Calu3 (cell line): ENCODE measurements at regions of chr1 and their contacts with region 1.

Region 1: GRCh38 chr1:110780600-110781484 is 92.1 kb upstream of the CD53 start:
- DNase-seq: peak; percentile 54
- H3K4me3 Mint-ChIP-seq: no peak overlapping the region
- H3K27ac Mint-ChIP-seq: no peak overlapping the region
- H3K4me1 Mint-ChIP-seq: no peaks in the 10 kb centered on the region
- H3K27me3 Mint-ChIP-seq: peaks cover 71% of the 10 kb centered on the region
- CTCF ChIP-seq: peak; percentile 55

Region 2: GRCh38 chr1:110524311-110525251 is 256.3 kb before region 1 on chr1:
- CTCF ChIA-PET with region 1: no interaction called
- intact Hi-C with region 1: loop called (anchors 2 kb)
- DNase-seq: peak; percentile 37
- H3K4me3 Mint-ChIP-seq: no peak overlapping the region
- H3K27ac Mint-ChIP-seq: no peak overlapping the region
- H3K4me1 Mint-ChIP-seq: peaks cover 6% of the 10 kb centered on the region
- H3K27me3 Mint-ChIP-seq: peaks cover 83% of the 10 kb centered on the region
- CTCF ChIP-seq: peak; percentile 51

Region 3: GRCh38 chr1:110630839-110631663 is 149.8 kb before region 1 on chr1:
- CTCF ChIA-PET with region 1: no interaction called
- intact Hi-C with region 1: loop called (anchors 2 kb)
- DNase-seq: peak; percentile 82
- H3K4me3 Mint-ChIP-seq: no peak overlapping the region
- H3K27ac Mint-ChIP-seq: no peak overlapping the region
- H3K4me1 Mint-ChIP-seq: peaks cover 8% of the 10 kb centered on the region
- H3K27me3 Mint-ChIP-seq: peaks cover 16% of the 10 kb centered on the region
- CTCF ChIP-seq: peak; percentile 49

Region 4: GRCh38 chr1:110756506-110756905 is 24.3 kb before region 1 on chr1:
- CTCF ChIA-PET with region 1: no interaction called
- intact Hi-C with region 1: no loop called
- DNase-seq: no peak
- H3K4me3 Mint-ChIP-seq: no peak overlapping the region
- H3K27ac Mint-ChIP-seq: no peak overlapping the region
- H3K4me1 Mint-ChIP-seq: no peaks in the 10 kb centered on the region
- H3K27me3 Mint-ChIP-seq: peaks cover 92% of the 10 kb centered on the region
- CTCF ChIP-seq: no peak

Region 5: GRCh38 chr1:110990536-110990935 is 209.7 kb after region 1 on chr1:
- CTCF ChIA-PET with region 1: interaction called, 3 read pairs
- intact Hi-C with region 1: loop called (anchors 5 kb)
- DNase-seq: no peak
- H3K4me3 Mint-ChIP-seq: no peak overlapping the region
- H3K27ac Mint-ChIP-seq: no peak overlapping the region
- H3K4me1 Mint-ChIP-seq: no peaks in the 10 kb centered on the region
- H3K27me3 Mint-ChIP-seq: peaks cover 35% of the 10 kb centered on the region
- CTCF ChIP-seq: no peak

Region 6: DNA sequence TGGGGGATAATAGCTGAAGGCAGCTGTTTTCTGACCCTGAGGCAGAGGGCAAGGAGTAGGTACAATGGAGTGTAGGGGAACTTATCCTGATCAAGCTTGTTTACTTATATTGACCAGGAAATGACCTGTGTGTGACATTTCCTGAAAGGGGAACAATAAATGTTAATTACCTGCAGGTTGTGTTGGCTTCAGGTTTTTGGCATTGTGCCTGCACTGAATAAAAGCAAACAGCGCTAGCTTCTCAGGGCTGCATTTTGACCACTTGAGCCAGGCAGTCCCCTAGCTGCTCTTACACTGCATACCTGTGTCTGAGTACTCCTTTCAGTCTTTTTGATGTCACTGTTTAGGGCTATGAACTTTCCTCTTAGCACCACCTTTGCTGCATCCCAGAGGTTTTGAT is 318.4 kb after region 1 on chr1:
- CTCF ChIA-PET with region 1: no interaction called
- intact Hi-C with region 1: no loop called
- DNase-seq: no peak
- H3K4me3 Mint-ChIP-seq: no peak overlapping the region
- H3K27ac Mint-ChIP-seq: no peak overlapping the region
- H3K4me1 Mint-ChIP-seq: no peaks in the 10 kb centered on the region
- H3K27me3 Mint-ChIP-seq: no peaks in the 10 kb centered on the region
- CTCF ChIP-seq: no peak